ENCODE measurements at regions of chr21 and their contacts with region 1.

Region 1: DNA sequence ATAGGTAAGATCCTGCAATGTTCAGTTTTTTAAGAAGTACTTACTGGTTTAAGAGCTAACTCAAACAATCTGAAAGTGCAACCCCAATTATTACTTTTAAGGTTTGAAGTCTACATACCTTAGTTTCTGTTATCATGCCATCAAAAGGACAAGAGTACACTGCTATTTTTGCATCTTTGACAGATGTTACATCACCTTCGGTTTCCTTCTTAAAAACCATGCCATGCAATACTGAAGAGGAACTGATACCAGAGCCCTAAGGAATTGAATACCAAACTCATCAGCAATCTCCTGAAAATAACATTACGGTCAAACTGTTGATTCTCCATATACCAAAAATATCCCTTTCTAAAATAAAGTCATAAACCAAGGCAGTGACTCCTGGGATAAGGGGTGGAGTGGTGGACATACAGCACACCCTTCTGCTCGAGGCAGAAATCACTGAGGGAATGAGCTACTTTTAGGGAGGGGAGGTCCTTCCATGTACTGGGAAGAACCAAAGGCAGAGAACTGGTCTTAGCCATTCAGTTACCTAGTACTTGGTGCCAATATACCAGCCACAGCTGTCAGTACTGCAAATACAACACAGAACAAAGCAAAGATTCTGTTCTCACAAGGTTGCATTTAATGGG is 8.5 kb downstream of the CCT8 start:
- DNase-seq: no peak
- H3K4me3 Mint-ChIP-seq: no peak overlapping the region
- H3K27ac Mint-ChIP-seq: peak overlapping the region; percentile 34
- H3K4me1 Mint-ChIP-seq: peaks cover 18% of the 10 kb centered on the region
- H3K27me3 Mint-ChIP-seq: no peaks in the 10 kb centered on the region

Region 2: DNA sequence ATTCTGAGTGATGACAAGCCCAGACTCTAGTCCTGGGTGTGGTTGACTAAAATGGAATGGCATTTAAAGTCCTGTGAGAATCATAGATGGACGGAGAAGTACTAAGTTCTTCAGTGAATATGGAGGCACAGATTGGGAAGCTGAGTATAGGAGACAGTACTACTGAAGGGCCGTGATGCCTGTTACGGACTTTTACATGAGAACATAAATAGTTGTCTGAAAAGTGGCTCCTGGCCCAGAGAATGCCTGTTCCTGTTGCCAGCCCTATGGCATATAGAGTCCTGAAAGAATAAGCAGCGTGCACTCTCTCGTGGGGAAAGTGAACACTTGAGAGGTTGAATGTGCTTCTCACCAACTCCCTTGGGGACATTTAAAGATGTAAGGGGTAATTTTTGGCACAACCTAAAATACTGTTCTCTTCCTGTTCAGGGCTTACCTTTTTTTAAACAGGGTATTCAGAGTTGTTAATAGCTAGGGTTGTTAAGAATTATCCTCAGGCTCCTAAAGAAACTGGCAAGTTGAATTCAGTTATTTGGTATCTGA is 11.9 kb before region 1 on chr21:
- CTCF ChIA-PET with region 1: interaction called, 3 read pairs
- intact Hi-C with region 1: loop called (anchors 2 kb)
- DNase-seq: no peak
- H3K4me3 Mint-ChIP-seq: no peak overlapping the region
- H3K27ac Mint-ChIP-seq: peak overlapping the region; percentile 14
- H3K4me1 Mint-ChIP-seq: no peaks in the 10 kb centered on the region
- H3K27me3 Mint-ChIP-seq: no peaks in the 10 kb centered on the region

Region 3: DNA sequence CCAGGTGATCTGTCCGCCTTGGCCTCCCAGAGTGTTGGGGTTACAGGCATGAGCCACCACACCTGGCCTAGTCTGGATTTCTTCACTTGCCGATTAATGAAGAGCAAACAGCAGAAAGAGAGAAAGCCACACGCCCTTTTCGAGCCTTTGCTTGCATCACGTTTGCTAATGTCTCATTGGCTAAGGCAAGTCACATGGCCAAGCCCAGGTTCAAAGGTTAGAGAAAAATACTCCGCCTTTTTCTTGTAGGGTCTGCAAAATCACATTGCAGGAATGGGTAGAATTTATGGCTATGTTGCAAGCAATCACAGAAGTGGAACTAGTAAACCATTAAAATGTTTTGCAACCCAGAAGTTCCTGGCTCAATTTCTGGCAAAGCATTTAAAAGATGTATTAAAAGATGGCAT is 207.0 kb after region 1 on chr21:
- CTCF ChIA-PET with region 1: no interaction called
- intact Hi-C with region 1: no loop called
- DNase-seq: no peak
- H3K4me3 Mint-ChIP-seq: no peak overlapping the region
- H3K27ac Mint-ChIP-seq: no peak overlapping the region
- H3K4me1 Mint-ChIP-seq: no peaks in the 10 kb centered on the region
- H3K27me3 Mint-ChIP-seq: no peaks in the 10 kb centered on the region